Sigmoid colon (tissue), 7 donors: ENCODE measurements at regions of chr6 and their contacts with region 1.

Region 1: GRCh38 chr6:168355716-168356449 is 36.3 kb upstream of the DACT2 start:
- DNase-seq: peak; percentile 74
- H3K4me3 ChIP-seq: peak overlapping the region in 1 of 4 donors; percentile 9
- H3K27ac ChIP-seq: no peak overlapping the region
- H3K4me1 ChIP-seq: peaks cover 0 to 8% (median 5%) of the 10 kb centered on the region in 4 donors
- H3K27me3 ChIP-seq: no peaks in the 10 kb centered on the region
- CTCF ChIP-seq: peak in 3 of 4 experiments; percentile 72 to 74 (median 73)
- EP300 ChIP-seq: no peak
- POLR2A ChIP-seq: no peak

Region 2: DNA sequence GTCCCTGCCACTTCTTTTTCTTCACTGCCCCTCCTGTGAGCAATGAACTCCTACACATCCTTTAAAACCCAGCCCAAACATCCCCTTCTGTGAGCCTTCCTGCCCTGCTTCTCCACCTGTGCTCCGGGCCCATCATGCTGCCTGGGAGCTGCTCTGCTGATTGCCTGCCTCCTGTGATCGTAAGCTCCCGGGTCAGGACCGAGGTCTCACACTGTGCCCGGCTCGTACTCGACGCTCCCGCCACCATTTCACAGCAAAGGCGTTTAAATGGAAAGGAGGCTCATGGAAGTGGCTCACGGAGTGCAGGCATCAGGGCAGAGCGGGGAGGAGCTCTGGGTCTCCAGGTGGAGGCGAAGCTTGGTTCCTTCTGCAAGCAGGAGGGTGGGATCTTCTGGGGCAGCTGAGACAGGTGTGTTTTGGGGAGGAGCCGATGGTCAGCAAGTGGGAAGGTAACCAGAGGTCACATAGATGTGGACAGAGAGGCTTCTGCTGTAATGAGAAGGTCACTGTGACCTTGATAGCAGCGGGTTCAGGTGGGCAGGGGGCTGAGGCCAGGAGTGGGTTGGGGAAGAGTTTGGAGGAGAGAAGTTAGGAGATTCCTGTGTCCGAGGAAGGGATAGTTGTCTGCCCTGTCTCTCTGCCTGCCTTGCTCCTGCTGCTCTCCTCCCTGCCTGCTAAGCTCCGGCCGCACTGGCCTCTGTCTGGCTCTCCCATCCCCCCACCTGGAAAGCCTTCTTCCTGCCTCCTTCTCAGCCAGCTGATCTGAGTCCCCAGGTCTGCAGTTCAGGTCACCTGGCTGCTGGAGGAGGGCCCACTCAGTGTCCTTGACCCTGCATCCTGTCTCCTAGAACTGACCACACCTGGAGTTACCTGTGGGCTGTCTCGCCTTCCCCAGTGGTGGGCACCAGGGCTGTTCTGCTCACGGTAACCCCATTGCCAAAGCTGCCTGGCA is 224.1 kb before region 1 on chr6:
- intact Hi-C with region 1: no loop called
- DNase-seq: peak; percentile 44
- H3K4me3 ChIP-seq: no peak overlapping the region
- H3K27ac ChIP-seq: no peak overlapping the region
- H3K4me1 ChIP-seq: peaks cover 0 to 11% (median 8%) of the 10 kb centered on the region in 4 donors
- H3K27me3 ChIP-seq: no peaks in the 10 kb centered on the region
- CTCF ChIP-seq: no peak
- EP300 ChIP-seq: no peak
- POLR2A ChIP-seq: no peak

Region 3: GRCh38 chr6:168150551-168151320 is 205.1 kb before region 1 on chr6:
- intact Hi-C with region 1: loop called (anchors 1 kb)
- DNase-seq: peak; percentile 64
- H3K4me3 ChIP-seq: no peak overlapping the region
- H3K27ac ChIP-seq: no peak overlapping the region
- H3K4me1 ChIP-seq: peaks cover 0 to 53% (median 34%) of the 10 kb centered on the region in 4 donors
- H3K27me3 ChIP-seq: no peaks in the 10 kb centered on the region
- CTCF ChIP-seq: peak; percentile 43 to 65 (median 54)
- EP300 ChIP-seq: no peak
- POLR2A ChIP-seq: no peak